Activated CD4-positive, alpha-beta T cell treated with anti-CD3 and anti-CD28 coated beads, Interleukin-2, amount 10 ng/mL, durations not matched to agents 24 days and 14 days (primary cell): ENCODE measurements at regions of chr4 and their contacts with region 1.

Region 1: DNA sequence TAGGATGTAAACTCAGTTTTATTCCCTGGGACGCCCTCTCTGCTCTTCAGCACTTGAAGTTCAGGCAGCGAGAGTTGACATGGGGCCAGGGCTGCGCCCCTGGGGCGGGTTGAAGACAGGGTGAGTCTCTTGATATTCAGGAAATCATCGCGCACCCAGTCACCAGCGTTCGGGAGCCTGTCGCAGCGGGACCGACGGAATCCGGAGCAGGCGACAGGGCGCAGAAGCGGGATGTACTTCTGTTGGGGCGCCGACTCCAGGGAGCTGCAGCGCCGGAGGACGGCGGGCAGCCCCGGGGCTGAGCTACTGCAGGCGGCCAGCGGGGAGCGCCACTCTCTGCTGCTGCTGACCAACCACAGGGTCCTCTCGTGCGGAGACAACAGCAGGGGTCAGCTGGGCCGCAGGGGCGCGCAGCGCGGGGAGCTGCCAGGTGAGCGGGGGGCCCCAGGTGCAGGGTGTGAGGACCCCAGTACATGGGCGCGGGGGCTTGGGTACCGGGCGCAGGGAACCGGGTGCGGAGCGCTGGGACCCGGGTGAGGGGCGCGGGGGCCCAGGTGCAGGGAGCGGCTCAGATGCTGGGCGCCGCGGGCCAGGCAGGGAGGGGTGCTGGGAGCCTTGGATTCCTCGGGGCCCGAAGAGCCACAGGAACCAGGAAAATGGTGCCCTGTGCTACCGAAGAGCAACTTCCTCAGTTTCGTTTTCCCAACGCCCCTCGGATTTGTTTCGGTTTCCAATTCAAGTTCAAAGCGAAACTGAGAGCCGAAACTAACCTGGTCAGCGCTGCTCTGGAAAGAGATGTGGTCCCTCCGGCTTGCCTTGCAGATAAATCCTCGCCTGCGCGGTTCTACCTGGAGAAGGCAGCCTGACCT is at the start of gene HERC6:
- DNase-seq: peak; percentile 95
- H3K4me3 Mint-ChIP-seq: peak within 1 kb of the TSS; percentile 86
- H3K27ac Mint-ChIP-seq: peak within 1 kb of the TSS; percentile 83
- H3K4me1 Mint-ChIP-seq: peaks cover 43% of the 10 kb centered on the region
- H3K27me3 Mint-ChIP-seq: no peaks in the 10 kb centered on the region
- total RNA-seq, gene HERC6: 5.3 and 6.4 TPM in 2 replicates

Region 2: DNA sequence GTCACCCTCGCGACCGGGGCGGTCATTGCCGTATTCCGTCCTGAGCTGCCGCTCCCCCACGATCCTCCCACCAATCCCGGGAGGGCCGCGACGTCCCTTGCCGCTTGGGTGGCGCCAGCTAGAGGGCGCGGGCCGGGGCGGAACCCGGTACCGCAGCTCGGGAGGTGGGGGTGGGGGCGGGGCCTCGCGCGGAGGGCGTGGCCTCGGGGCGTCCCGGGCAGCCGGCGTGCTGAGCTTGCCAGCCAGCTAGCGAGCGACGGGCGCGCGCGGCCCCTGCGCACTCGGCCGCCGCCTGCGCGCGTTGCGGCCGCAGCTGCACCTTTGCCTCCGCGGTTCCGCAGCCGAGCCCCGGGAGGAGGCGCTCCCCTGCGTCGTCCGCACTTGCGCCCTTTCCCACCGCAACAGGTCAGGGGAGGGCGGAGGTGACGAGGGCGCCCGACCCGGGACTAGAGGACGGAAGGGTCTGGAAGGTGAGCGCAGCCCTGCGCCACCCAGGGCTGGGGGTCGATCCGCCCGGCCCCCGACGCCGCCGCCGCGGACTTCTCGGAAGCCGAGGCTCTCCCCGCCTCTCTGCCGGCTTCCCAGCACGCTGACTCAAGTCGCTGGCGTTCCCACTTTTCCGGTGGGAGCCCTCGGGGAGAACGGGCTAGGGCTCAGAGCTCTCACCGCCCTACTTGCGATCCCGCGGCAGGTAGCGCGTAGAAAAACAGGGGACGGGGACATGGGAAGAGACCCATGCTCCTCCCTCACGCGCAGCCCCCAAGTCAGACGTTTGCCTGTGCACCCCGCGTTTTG is 1444.0 kb before region 1 on chr4 and contains the start of gene AFF1:
- intact Hi-C with region 1: loop called (anchors 10 kb)
- DNase-seq: peak; percentile 96
- H3K4me3 Mint-ChIP-seq: peak within 1 kb of the TSS; percentile 94
- H3K27ac Mint-ChIP-seq: peak within 1 kb of the TSS; percentile 98
- H3K4me1 Mint-ChIP-seq: peaks cover 48% of the 10 kb centered on the region
- H3K27me3 Mint-ChIP-seq: no peaks in the 10 kb centered on the region
- total RNA-seq, gene AFF1: 44.0 and 44.3 TPM in 2 replicates

Region 3: DNA sequence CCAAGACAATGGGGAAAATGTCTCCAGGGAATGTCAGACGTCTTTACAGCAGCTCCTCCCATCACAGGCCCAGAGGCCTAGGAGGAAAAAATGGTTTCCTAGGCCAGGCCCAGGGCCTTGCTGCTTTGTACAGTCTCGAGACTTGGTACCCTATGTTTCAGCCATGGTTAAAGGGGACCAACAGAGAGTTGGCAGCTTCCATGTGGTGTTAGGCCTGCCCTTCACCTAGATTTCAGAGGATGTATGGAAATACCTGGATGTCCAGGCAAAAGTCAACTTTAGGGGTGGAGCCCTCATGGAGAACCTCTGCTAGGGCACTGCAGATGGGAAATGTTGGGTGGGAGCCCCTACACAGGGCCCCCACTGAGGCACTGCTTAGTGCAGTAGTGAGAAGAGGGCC is 259.0 kb before region 1 on chr4:
- intact Hi-C with region 1: no loop called
- DNase-seq: no peak
- H3K4me3 Mint-ChIP-seq: no peak overlapping the region
- H3K27ac Mint-ChIP-seq: no peak overlapping the region
- H3K4me1 Mint-ChIP-seq: no peaks in the 10 kb centered on the region
- H3K27me3 Mint-ChIP-seq: no peaks in the 10 kb centered on the region

Region 4: DNA sequence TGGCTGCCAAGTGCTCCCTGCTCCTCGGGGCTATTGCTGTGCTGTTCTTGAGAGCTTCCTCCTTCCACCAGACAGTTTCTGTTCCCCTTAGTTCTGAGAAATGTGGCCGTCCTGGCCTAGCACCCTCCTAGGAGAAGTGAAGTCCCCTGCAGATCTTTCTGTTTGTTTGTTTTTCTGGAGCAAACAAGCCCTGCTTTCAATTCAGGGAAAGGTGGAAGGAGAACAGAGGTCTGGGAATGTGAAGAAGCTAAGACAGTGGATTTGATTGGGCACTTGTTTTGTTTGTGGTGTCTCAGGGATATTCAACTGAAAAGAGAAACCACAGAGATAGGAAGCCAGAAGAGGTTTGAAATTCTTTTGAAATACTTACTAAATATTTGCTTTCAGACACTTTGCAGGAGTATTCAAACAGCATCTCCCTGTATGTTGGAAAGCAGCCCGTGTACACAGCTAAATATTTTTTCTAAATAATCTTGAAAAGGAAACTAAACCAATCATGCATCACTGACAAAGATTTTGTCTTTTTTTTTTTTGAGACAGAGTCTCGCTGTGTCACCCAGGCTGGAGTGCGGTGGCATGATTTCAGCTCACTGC is 58.0 kb before region 1 on chr4:
- intact Hi-C with region 1: loop called (anchors 5 kb)
- DNase-seq: peak; percentile 84
- H3K4me3 Mint-ChIP-seq: peak overlapping the region; percentile 77
- H3K27ac Mint-ChIP-seq: peak overlapping the region; percentile 92
- H3K4me1 Mint-ChIP-seq: peaks cover 20% of the 10 kb centered on the region
- H3K27me3 Mint-ChIP-seq: no peaks in the 10 kb centered on the region

Region 5: DNA sequence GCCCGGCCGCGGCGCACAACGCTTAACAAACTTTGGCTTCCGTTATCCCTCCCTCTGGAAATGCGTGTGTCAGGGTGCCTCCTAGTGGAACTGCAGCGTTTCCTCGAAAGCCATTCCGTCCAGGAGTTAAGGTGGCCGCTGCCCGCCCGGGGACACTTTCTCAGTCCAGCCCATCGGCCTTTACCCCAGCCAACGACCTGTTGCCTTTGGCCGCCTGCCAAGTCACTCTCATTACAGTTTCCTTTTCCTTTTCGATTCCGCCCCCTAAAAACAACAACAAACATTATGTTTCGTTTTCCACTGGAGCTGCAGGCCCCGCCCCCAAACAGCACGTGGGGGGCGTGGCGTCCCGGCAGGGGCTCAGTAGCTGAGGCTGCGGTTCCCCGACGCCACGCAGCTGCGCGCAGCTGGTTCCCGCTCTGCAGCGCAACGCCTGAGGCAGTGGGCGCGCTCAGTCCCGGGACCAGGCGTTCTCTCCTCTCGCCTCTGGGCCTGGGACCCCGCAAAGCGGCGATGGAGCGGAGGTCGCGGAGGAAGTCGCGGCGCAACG is 77.9 kb after region 1 on chr4 and contains the start of gene HERC5:
- intact Hi-C with region 1: loop called (anchors 1 kb)
- DNase-seq: peak; percentile 98
- H3K4me3 Mint-ChIP-seq: peak within 1 kb of the TSS; percentile 93
- H3K27ac Mint-ChIP-seq: peak within 1 kb of the TSS; percentile 100
- H3K4me1 Mint-ChIP-seq: peaks cover 47% of the 10 kb centered on the region
- H3K27me3 Mint-ChIP-seq: no peaks in the 10 kb centered on the region
- total RNA-seq, gene HERC5: 18.1 and 19.7 TPM in 2 replicates

Region 6: DNA sequence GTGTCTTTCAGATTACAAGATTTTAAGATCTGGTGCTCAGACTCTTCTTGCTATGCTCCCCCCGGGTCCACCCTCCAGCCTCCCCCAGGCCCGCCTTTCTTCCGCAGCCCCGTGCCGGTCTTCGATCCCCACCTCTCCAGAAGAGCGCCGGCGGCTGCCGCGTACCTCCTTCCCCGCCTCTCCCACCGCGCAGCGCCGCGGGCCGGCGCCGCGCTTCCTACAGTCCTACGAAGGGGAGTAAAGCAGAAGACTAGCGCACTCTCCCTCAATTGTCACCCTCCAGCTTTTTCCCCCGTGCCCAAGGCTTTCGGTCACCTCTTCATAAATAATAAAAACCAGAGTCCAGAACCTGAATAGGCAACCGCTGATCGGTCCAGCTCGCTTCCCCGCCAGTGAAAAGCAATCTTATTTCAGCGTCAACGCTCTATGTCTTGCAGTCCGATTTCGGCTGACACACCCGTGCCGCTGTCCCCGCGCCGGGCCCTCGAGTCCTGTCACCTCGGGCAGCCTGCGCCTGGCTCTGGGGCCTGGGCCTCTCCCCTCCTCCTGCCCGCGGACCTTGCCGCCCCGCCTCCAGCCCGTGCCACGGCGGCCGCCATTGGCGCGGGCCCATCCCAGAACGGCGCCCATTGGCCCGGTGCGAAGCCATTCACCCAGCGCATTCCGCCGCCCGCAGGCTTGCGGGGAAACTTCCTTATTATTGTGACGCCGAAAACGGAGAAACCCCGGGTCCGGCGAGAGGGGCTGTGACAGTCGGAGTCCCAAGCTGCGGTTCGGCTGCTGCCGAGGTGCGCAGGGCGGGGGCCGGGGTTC is 213.1 kb after region 1 on chr4 and contains the start of gene HERC3:
- intact Hi-C with region 1: loop called (anchors 5 kb)
- DNase-seq: peak; percentile 98
- H3K4me3 Mint-ChIP-seq: peak within 1 kb of the TSS; percentile 90
- H3K27ac Mint-ChIP-seq: peak within 1 kb of the TSS; percentile 85
- H3K4me1 Mint-ChIP-seq: peaks cover 31% of the 10 kb centered on the region
- H3K27me3 Mint-ChIP-seq: peaks cover 17% of the 10 kb centered on the region
- total RNA-seq, gene HERC3: 18.8 and 18.9 TPM in 2 replicates

Region 7: DNA sequence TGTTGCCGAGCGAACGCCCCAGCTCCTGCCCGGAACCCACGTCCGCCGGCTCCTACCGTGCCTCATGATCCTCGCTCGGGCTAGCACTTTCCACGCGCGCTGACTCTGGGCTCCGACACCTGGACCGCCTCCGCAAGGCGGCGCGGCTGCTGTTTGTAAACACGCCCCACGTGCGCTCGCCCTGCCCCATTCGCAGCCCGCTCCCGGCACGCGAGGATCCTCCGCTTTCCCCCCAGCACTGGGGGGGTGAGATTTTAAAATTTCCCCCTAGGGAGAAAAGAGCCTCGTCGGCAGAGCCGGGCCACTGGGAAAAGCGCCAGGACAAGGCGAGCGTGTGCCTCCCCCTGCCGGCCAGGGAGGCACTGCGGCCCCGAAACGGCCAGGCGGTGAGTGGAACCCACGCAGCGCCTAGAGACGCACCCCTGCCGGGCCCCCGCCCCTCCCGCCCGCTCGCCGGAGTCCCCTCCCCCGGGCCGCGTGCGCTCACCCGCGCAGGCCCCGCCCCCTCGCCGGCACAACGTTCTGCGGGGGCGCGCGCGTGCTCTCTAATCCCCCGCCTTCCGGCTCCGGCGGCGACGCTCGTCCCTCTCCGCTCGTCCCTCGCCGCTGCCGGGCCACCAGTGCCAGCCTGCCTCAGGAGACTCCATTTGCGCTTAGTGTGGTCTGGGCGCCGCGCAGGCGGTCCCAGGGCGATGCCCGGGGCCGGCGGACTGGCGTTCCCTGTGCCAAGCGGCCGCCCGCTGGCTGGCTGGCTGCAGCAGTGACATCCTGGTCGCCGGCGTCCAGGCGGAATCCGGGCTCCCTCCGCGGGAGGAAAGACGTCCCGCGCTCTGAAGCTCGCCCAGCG is 732.3 kb after region 1 on chr4 and contains the start of gene TIGD2:
- intact Hi-C with region 1: loop called (anchors 2 kb)
- DNase-seq: peak; percentile 95
- H3K4me3 Mint-ChIP-seq: peak within 1 kb of the TSS; percentile 83
- H3K27ac Mint-ChIP-seq: peak within 1 kb of the TSS; percentile 76
- H3K4me1 Mint-ChIP-seq: peaks cover 22% of the 10 kb centered on the region
- H3K27me3 Mint-ChIP-seq: peaks cover 32% of the 10 kb centered on the region
- total RNA-seq, gene TIGD2: 2.6 and 3.5 TPM in 2 replicates